ENCODE measurements at regions of chr3 and their contacts with region 1.

Region 1: GRCh38 chr3:177385831-177386301 is 188.6 kb upstream of the TBL1XR1 start:
- DNase-seq: no peak
- ATAC-seq: no peak
- H3K4me3 ChIP-seq: no peak overlapping the region
- H3K4me3 Mint-ChIP-seq: no peak overlapping the region
- H3K27ac ChIP-seq: no peak overlapping the region
- H3K27ac Mint-ChIP-seq: no peak overlapping the region
- H3K4me1 ChIP-seq: no peaks in the 10 kb centered on the region
- H3K4me1 Mint-ChIP-seq: peaks cover 0 to 2% (median 0%) of the 10 kb centered on the region in 3 donors
- H3K27me3 ChIP-seq: no peaks in the 10 kb centered on the region
- H3K27me3 Mint-ChIP-seq: no peaks in the 10 kb centered on the region

Region 2: DNA sequence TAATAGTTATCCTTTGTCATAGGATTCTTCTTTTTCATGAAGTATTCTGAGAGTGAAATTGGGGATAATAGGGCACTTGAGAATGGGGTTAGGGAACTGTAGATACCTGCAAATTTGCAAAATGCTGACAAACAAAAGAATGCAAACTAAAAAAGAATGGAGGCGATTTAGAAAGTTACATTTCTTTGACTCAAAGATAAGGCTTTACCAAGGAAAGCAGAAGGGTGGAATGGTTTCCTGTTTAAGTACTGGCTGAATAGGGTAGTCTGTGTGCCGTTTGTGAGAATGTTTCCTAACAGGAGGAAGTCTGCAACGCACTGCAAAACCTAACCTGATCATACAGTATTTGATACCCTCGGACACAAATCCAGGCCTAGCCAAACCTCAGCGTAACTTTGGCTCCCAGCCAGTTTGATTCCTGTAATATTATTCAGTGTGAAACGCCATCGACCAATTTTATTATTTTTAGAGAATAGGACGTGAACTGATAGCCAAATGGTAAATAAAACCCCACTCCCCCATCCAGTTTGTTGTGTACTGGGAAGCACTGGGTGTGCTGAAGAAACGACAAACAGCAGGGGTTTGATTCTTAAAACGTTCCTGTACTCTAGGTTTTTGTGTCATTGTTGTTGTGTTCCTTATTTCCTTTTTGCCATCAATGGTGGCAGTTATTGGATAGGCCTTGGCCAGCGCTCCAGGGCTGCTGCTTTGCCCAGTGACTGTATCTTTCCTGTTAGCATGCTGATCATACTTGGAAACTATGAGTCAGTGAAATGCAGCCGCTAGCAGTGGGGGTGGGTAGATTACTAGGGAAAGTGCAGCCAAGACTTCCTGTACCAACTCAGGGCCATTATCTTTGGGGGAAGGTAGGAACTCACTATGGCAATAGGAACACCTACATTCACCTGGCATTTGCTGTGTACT is 40.6 kb before region 1 on chr3:
- CTCF ChIA-PET with region 1: no interaction called
- POLR2A ChIA-PET with region 1: interaction called in 1 of 2 experiments, 11 read pairs
- DNase-seq: peak in 8 of 35 experiments; percentile 4 to 43 (median 28)
- ATAC-seq: peak; percentile 52 to 93 (median 84)
- H3K4me3 ChIP-seq: no peak overlapping the region
- H3K4me3 Mint-ChIP-seq: peak overlapping the region in 2 of 3 donors; percentile 10 to 28
- H3K27ac ChIP-seq: no peak overlapping the region
- H3K27ac Mint-ChIP-seq: peak overlapping the region; percentile 28 to 47
- H3K4me1 ChIP-seq: peaks cover 7 to 12% of the 10 kb centered on the region in 2 experiments
- H3K4me1 Mint-ChIP-seq: peaks cover 15 to 22% (median 18%) of the 10 kb centered on the region in 3 donors
- H3K27me3 ChIP-seq: no peaks in the 10 kb centered on the region
- H3K27me3 Mint-ChIP-seq: no peaks in the 10 kb centered on the region

Region 3: DNA sequence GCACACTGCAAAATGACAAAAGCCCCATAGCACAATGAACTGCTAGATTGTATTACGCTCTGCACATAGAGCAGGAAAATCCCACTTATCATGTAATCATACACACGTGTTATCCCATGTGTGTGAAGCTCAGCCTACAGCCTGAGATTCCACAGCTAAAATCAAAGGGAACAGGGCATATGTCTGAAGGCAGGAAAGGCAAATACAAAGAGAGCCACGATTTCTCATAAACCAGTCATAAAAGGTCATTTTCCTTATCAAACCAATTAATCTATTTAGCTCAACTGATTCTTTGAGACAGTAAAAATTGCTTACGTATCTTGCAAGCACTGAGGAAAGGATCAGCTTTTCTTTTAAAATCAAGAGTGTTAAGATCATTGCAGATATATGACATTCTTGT is 10.8 kb after region 1 on chr3:
- CTCF ChIA-PET with region 1: no interaction called
- POLR2A ChIA-PET with region 1: interaction called in 1 of 2 experiments, 12 read pairs
- DNase-seq: no peak
- ATAC-seq: no peak
- H3K4me3 ChIP-seq: no peak overlapping the region
- H3K4me3 Mint-ChIP-seq: no peak overlapping the region
- H3K27ac ChIP-seq: no peak overlapping the region
- H3K27ac Mint-ChIP-seq: peak overlapping the region in 1 of 2 donors; percentile 55
- H3K4me1 ChIP-seq: no peaks in the 10 kb centered on the region
- H3K4me1 Mint-ChIP-seq: peaks cover 7 to 9% (median 7%) of the 10 kb centered on the region in 3 donors
- H3K27me3 ChIP-seq: no peaks in the 10 kb centered on the region
- H3K27me3 Mint-ChIP-seq: no peaks in the 10 kb centered on the region

Region 4: GRCh38 chr3:177426878-177427495 is 41.1 kb after region 1 on chr3:
- CTCF ChIA-PET with region 1: no interaction called
- POLR2A ChIA-PET with region 1: no interaction called
- DNase-seq: peak in 26 of 35 experiments; percentile 1 to 59 (median 14)
- ATAC-seq: peak; percentile 82 to 93 (median 87)
- H3K4me3 ChIP-seq: peak overlapping the region in 1 of 2 donors; percentile 2
- H3K4me3 Mint-ChIP-seq: peak overlapping the region; percentile 48 to 57 (median 56)
- H3K27ac ChIP-seq: peak overlapping the region; percentile 64
- H3K27ac Mint-ChIP-seq: peak overlapping the region; percentile 90 to 95
- H3K4me1 ChIP-seq: peaks cover 3 to 14% of the 10 kb centered on the region in 2 experiments
- H3K4me1 Mint-ChIP-seq: peaks cover 31 to 37% (median 32%) of the 10 kb centered on the region in 3 donors
- H3K27me3 ChIP-seq: no peaks in the 10 kb centered on the region
- H3K27me3 Mint-ChIP-seq: no peaks in the 10 kb centered on the region

Measured in T-cell (primary cell).